ENCODE measurements at regions of chr6 and their contacts with region 1.

Region 1: GRCh38 chr6:56914798-56915658 is 39.9 kb upstream of the BEND6 start:
- DNase-seq: peak in 4 of 5 donors; percentile 39 to 55 (median 46)
- ATAC-seq: peak; percentile 84 to 97 (median 93)
- H3K4me3 ChIP-seq: no peak overlapping the region
- H3K27ac ChIP-seq: peak overlapping the region in 3 of 12 donors; percentile 18 to 58 (median 27)
- H3K4me1 ChIP-seq: peaks cover 0 to 13% (median 0%) of the 10 kb centered on the region in 12 donors
- H3K27me3 ChIP-seq: peaks cover 0 to 5% (median 0%) of the 10 kb centered on the region in 9 donors
- CTCF ChIP-seq: no peak
- POLR2A ChIP-seq: no peak

Region 2: DNA sequence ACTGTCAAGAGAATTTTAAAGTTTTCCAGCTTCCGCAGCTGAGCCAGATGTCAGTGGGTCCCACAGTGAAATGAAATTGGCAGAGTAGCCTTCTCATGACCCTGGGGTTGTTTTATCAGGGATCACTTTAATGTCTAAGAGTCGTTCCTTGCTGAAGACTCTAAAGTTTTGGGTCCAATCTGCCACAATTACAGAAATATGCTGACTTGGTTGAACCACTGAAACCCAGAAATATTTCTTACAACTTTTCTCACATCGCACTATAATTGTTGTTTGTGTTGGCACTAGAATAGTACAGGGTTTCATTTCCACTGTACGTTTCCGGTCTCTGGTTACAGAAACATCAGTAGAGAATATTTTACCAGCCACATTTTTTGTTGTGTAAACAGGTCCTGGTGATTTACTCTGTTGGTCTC is 1445.1 kb before region 1 on chr6:
- intact Hi-C with region 1: no loop called
- DNase-seq: peak in 2 of 5 donors; percentile 8 to 27
- ATAC-seq: peak in 2 of 4 donors; percentile 24 to 46
- H3K4me3 ChIP-seq: no peak overlapping the region
- H3K27ac ChIP-seq: peak overlapping the region in 7 of 12 donors; percentile 15 to 48 (median 24)
- H3K4me1 ChIP-seq: peaks cover 0 to 2% (median 0%) of the 10 kb centered on the region in 12 donors
- H3K27me3 ChIP-seq: no peaks in the 10 kb centered on the region
- CTCF ChIP-seq: no peak
- POLR2A ChIP-seq: no peak

Region 3: GRCh38 chr6:56965126-56965525 is 50.1 kb after region 1 on chr6:
- intact Hi-C with region 1: loop called in 1 of 10 experiments (anchors 5 kb)
- DNase-seq: no peak
- ATAC-seq: no peak
- H3K4me3 ChIP-seq: no peak overlapping the region
- H3K27ac ChIP-seq: no peak overlapping the region
- H3K4me1 ChIP-seq: no peaks in the 10 kb centered on the region
- H3K27me3 ChIP-seq: no peaks in the 10 kb centered on the region
- CTCF ChIP-seq: no peak
- POLR2A ChIP-seq: no peak